PC-9 (cell line): ENCODE measurements at regions of chr7 and their contacts with region 1.

Region 1: DNA sequence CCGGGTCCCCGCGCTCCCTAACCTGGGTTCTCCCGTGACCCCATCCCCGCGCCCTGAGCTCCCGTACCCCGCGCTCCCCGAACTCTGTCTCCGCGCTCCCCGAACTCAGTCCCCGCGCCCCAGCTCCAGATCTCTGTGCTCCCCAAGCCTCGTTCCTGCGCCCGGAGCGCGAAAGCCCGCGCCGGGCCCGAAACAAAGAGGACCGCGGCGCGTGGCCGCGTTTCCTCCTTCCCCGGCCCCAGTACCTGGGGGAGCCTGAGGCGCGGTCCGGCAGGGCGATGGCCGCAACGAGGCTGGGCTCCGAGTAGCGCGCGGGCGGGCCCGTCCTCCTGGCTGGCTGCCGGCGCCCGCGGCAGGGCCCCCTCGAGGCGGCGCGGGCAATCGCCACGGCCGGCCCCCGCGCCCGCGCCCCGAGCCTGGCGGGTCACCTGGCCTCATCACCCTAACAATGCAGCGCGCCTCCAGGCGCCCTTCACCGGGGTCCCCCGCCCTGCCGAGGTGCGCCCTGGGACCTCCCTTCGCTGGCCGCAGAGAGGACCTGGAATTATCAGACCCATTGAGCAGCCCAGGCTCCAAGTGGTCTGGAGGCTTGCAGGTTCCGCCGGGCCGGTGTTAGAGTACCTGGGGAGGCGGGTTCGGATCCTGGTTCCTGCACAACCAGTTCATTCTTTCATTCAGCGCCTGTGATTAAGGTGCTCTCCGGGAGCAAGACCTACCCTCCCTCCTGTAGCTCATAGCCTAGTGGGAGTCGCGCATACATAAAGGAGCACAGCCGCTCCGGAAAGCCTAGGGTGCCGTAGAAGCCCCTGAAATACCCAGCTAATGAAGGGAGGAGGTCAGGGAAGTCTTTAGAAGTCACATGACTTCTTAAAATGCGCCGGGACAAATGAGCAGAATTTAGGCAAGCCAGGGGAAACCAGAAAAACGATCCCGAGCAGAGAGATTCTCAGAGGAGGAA is at the start of gene TNS3:
- DNase-seq: peak; percentile 64 to 74
- H3K4me3 ChIP-seq: peak within 1 kb of the TSS; percentile 65
- H3K27ac ChIP-seq: peak within 1 kb of the TSS; percentile 87
- H3K4me1 ChIP-seq: peaks cover 80% of the 10 kb centered on the region
- H3K27me3 ChIP-seq: no peaks in the 10 kb centered on the region
- CTCF ChIP-seq: no peak; the same call in 1 of the 2 replicates
- total RNA-seq, gene TNS3: 111 and 143 TPM in 2 replicates

Region 2: GRCh38 chr7:46153951-46154787 is 1427.9 kb before region 1 on chr7:
- CTCF ChIA-PET with region 1: no interaction called
- POLR2A ChIA-PET with region 1: no interaction called
- intact Hi-C with region 1: no loop called
- DNase-seq: peak; percentile 55 to 99
- H3K4me3 ChIP-seq: no peak overlapping the region
- H3K27ac ChIP-seq: peak overlapping the region; percentile 91
- H3K4me1 ChIP-seq: peaks cover 37% of the 10 kb centered on the region
- H3K27me3 ChIP-seq: no peaks in the 10 kb centered on the region
- CTCF ChIP-seq: 0 out of 2 replicates have a peak, but pooled peaks have one; percentile 28

Region 3: GRCh38 chr7:46864716-46865115 is 717.4 kb before region 1 on chr7:
- CTCF ChIA-PET with region 1: no interaction called
- POLR2A ChIA-PET with region 1: no interaction called
- intact Hi-C with region 1: no loop called
- DNase-seq: no peak
- H3K4me3 ChIP-seq: no peak overlapping the region
- H3K27ac ChIP-seq: no peak overlapping the region
- H3K4me1 ChIP-seq: no peaks in the 10 kb centered on the region
- H3K27me3 ChIP-seq: no peaks in the 10 kb centered on the region
- CTCF ChIP-seq: no peak

Region 4: GRCh38 chr7:47520406-47520805 is 61.7 kb before region 1 on chr7:
- CTCF ChIA-PET with region 1: no interaction called
- POLR2A ChIA-PET with region 1: no interaction called
- intact Hi-C with region 1: no loop called
- DNase-seq: no peak
- H3K4me3 ChIP-seq: no peak overlapping the region
- H3K27ac ChIP-seq: no peak overlapping the region
- H3K4me1 ChIP-seq: no peaks in the 10 kb centered on the region
- H3K27me3 ChIP-seq: no peaks in the 10 kb centered on the region
- CTCF ChIP-seq: no peak

Region 5: GRCh38 chr7:47625861-47626715 is 44.0 kb after region 1 on chr7:
- CTCF ChIA-PET with region 1: no interaction called
- POLR2A ChIA-PET with region 1: interaction called, 15 read pairs
- intact Hi-C with region 1: no loop called
- DNase-seq: peak in 1 of 2 experiments; percentile 32
- H3K4me3 ChIP-seq: no peak overlapping the region
- H3K27ac ChIP-seq: no peak overlapping the region
- H3K4me1 ChIP-seq: peaks cover 10% of the 10 kb centered on the region
- H3K27me3 ChIP-seq: no peaks in the 10 kb centered on the region
- CTCF ChIP-seq: no peak

Region 6: DNA sequence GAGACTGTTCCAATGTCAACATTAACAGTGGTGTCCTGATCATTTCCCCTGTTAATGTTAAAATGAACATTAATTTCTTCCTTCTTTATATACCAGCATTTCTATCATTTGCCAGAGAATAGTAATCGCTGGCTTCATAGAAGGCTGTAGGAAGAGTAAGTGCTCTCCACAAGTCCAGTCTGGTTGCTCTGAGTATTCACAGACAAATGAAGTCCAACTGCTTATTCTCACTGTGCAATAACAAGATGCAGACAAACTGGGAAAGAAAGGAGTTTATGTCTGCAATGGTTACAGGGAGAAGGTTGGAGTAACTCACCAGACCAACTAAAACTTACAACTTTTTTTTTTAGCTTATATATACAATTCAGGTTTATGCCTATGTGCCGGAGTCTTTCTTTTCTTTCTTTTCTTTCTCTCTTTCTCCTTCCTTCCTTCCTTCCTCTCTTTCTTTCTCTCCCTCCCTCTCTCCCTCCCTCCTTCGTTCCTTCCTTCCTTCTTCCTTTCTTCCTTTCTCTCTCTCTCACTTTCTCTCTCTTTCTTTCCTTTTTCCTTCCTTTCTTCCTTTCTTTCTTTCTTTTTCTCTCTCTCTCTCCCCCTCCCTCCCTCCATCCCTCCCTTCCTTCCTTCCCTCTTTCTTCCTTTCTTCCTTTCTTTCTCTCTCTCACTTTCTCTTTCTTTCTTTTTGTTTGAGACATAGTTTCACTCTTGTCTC is 1361.3 kb after region 1 on chr7:
- CTCF ChIA-PET with region 1: no interaction called
- POLR2A ChIA-PET with region 1: no interaction called
- intact Hi-C with region 1: no loop called
- DNase-seq: no peak
- H3K4me3 ChIP-seq: no peak overlapping the region
- H3K27ac ChIP-seq: no peak overlapping the region
- H3K4me1 ChIP-seq: no peaks in the 10 kb centered on the region
- H3K27me3 ChIP-seq: no peaks in the 10 kb centered on the region
- CTCF ChIP-seq: no peak